GM12878 (cell line): ENCODE measurements at regions of chr5 and their contacts with region 1.

Region 1: DNA sequence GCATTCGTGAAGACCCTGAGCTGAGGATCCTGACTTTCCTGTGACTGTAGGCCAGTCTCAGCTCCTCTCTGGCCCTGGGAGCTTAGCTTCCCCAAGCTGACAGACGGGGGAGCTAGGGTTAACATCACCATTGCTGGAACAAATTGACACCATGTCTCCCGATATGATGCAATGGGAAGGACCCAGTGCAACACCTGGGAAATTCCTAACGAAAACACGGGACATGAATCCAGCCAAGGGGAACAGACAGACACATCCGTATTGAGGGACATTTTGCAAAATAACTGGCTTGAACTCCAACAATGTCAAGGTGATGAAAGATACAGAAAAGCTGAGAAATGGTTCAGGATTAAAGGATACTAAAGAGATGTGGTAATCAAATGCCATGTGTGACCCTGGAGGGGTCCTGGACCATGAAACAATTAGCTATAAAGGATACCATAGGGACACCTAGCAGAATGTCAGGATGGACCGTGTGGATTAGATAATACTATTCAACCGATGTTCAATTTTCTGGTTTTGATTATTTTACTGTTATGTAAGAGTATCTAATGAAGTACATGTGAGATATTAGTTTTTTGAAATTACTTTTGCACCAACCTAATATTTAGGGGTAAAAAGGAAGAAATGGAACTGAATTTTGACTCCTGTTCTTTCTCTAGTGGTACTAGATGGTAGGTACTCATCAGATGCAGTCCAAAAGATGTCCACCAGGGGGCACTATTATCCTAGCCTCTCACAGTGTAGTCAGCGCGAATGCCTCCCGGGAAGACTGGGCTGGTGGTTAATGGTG is 52.7 kb downstream of the NDST1 start:
- DNase-seq: peak; percentile 42
- ATAC-seq: peak; percentile 91
- H3K4me3 ChIP-seq: no peak overlapping the region
- H3K27ac ChIP-seq: no peak overlapping the region
- H3K4me1 ChIP-seq: peaks cover 14% of the 10 kb centered on the region
- H3K27me3 ChIP-seq: no peaks in the 10 kb centered on the region
- CTCF ChIP-seq: peak; percentile 75 to 89 (median 86)
- EP300 ChIP-seq: no peak
- POLR2A ChIP-seq: no peak
- RAD21 ChIP-seq: peak; percentile 96

Region 2: DNA sequence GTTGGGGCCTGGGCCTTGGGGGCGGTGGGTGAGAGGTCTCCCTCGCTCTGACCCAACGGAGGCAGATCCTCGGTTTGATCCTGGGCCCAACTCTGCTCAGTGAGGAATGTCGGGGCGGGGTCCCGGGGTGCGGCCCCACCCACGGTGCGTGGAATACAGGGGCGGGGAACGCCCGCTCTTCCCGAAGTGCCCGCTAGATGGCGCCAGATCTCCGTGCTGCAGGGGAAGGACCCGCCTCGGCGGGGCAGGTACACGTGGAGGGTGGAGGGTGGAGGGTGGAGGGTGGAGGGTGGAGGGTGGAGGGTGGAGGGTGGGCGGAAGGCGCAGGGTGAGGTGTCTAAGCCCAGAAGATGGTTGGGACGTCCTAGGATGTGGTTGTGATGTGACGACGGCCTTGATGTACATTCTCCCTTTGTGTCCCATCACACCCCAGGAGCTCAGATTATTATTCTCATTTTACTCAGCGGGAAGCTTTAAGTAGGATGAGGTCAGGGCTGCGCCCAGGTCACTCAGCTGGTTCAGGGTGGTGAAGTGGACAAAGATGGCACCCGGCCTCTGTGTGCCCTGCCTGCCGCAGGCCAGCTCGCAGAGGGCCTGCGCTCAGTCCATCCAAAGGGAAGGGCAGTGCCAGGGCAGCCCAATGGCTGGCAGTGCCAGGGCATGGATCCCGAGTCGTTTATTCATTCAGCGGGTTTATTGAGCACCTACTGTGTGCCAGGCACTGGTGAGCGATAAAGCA is 101.6 kb before region 1 on chr5:
- CTCF ChIA-PET with region 1: interaction called, 97 read pairs
- POLR2A ChIA-PET with region 1: no interaction called
- RAD21 ChIA-PET with region 1: interaction called, 59 read pairs
- SMC1A ChIA-PET with region 1: interaction called, 58 read pairs
- in situ Hi-C with region 1: no loop called
- intact Hi-C with region 1: loop called (anchors 5 kb)
- DNase-seq: no peak
- ATAC-seq: peak; percentile 91
- H3K4me3 ChIP-seq: peak overlapping the region; percentile 39; the same call in 1 of the 2 replicates
- H3K27ac ChIP-seq: no peak overlapping the region
- H3K4me1 ChIP-seq: peaks cover 35% of the 10 kb centered on the region
- H3K27me3 ChIP-seq: no peaks in the 10 kb centered on the region
- CTCF ChIP-seq: peak; percentile 62 to 93 (median 84)
- EP300 ChIP-seq: no peak
- POLR2A ChIP-seq: no peak
- RAD21 ChIP-seq: peak; percentile 92

Region 3: GRCh38 chr5:150609843-150610584 is 49.4 kb after region 1 on chr5:
- CTCF ChIA-PET with region 1: no interaction called
- POLR2A ChIA-PET with region 1: no interaction called
- RAD21 ChIA-PET with region 1: no interaction called
- SMC1A ChIA-PET with region 1: no interaction called
- in situ Hi-C with region 1: no loop called
- intact Hi-C with region 1: no loop called
- DNase-seq: no peak
- ATAC-seq: peak; percentile 42
- H3K4me3 ChIP-seq: no peak overlapping the region
- H3K27ac ChIP-seq: no peak overlapping the region
- H3K4me1 ChIP-seq: no peaks in the 10 kb centered on the region
- H3K27me3 ChIP-seq: no peaks in the 10 kb centered on the region; a peak in 1 of 4 replicates
- CTCF ChIP-seq: no peak
- EP300 ChIP-seq: no peak
- POLR2A ChIP-seq: no peak
- RAD21 ChIP-seq: no peak

Region 4: GRCh38 chr5:150624334-150625163 is 64.0 kb after region 1 on chr5:
- CTCF ChIA-PET with region 1: interaction called, 5 read pairs
- POLR2A ChIA-PET with region 1: no interaction called
- RAD21 ChIA-PET with region 1: interaction called, 5 read pairs
- SMC1A ChIA-PET with region 1: interaction called, 16 read pairs
- in situ Hi-C with region 1: no loop called
- intact Hi-C with region 1: loop called (anchors 1 kb)
- DNase-seq: no peak
- ATAC-seq: peak; percentile 43
- H3K4me3 ChIP-seq: peak overlapping the region; percentile 91
- H3K27ac ChIP-seq: peak overlapping the region; percentile 66
- H3K4me1 ChIP-seq: peaks cover 40% of the 10 kb centered on the region
- H3K27me3 ChIP-seq: no peaks in the 10 kb centered on the region
- CTCF ChIP-seq: peak in 1 of 3 experiments; percentile 19; a peak in 1 of 6 replicates
- EP300 ChIP-seq: no peak
- POLR2A ChIP-seq: no peak
- RAD21 ChIP-seq: no peak

Region 5: DNA sequence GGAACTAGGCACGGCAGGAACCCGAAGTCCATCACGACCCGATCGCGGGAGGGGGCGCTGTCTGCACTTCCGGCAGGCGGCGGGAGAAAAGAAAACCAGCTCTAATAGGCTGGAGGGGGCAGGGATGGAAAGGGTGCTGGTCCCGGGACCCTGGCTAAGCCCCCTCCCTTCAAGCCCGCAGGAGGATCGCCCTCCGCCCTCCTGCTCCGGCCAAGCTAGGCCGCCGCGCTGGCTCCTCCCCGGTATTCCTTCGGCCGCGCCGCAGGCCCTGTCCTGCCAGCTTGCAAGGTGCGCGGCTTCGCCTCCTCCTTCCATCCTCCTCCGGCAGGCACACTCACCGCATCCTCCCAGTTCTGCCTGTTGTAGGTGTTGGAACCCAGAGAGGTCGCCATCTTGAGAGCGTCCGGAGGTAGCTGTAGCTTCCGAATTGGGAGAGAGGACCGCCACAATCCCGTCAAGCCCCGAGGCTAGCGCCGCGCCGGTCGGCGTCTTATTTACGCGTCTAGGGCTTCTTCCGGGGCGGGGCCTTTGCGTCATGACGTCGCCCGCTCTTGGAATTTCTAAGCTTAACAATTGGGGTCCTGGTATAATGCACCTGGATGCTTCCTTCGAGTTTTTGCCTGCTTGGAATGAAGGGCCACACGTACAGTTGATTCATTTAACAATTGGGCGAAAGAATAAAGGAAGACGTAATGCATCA is 140.1 kb after region 1 on chr5 and contains the start of gene RBM22:
- CTCF ChIA-PET with region 1: interaction called, 42 read pairs
- POLR2A ChIA-PET with region 1: interaction called, 4 read pairs
- RAD21 ChIA-PET with region 1: interaction called, 26 read pairs
- SMC1A ChIA-PET with region 1: interaction called, 27 read pairs
- in situ Hi-C with region 1: no loop called
- intact Hi-C with region 1: loop called (anchors 2 kb)
- DNase-seq: peak; percentile 57
- ATAC-seq: peak; percentile 98
- H3K4me3 ChIP-seq: peak within 1 kb of the TSS; percentile 91
- H3K27ac ChIP-seq: peak within 1 kb of the TSS; percentile 87
- H3K4me1 ChIP-seq: no peaks in the 10 kb centered on the region
- H3K27me3 ChIP-seq: no peaks in the 10 kb centered on the region
- CTCF ChIP-seq: peak; percentile 57 to 70 (median 60)
- EP300 ChIP-seq: peak in 1 of 2 experiments; percentile 22; a peak in 1 of 4 replicates
- POLR2A ChIP-seq: peak; percentile 93
- RAD21 ChIP-seq: peak; percentile 29; the same call in 1 of the 2 replicates
- polyA plus RNA-seq, gene RBM22: 26.3 to 40.3 TPM

Region 6: DNA sequence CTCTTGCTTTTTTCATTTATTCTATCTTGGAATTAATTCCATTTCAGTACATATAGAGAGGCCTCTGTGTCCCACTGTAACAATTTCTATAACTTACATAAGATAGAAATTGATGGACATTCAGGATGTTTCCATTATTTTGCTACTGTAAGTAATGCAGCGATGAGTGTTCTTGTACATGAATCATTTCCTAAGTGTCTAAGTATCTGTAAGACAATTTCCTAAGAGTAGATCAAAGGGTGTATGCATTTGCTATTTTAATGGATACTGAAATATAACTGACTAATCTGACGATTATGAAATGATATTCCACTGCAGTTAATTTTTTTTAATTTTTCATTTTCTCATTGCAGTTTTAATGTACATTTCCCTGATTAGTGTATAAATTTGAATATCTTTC is 163.2 kb after region 1 on chr5:
- CTCF ChIA-PET with region 1: interaction called, 12 read pairs
- POLR2A ChIA-PET with region 1: no interaction called
- RAD21 ChIA-PET with region 1: interaction called, 3 read pairs
- SMC1A ChIA-PET with region 1: interaction called, 4 read pairs
- in situ Hi-C with region 1: no loop called
- intact Hi-C with region 1: no loop called
- DNase-seq: no peak
- ATAC-seq: no peak
- H3K4me3 ChIP-seq: no peak overlapping the region
- H3K27ac ChIP-seq: no peak overlapping the region
- H3K4me1 ChIP-seq: no peaks in the 10 kb centered on the region
- H3K27me3 ChIP-seq: no peaks in the 10 kb centered on the region
- CTCF ChIP-seq: no peak
- EP300 ChIP-seq: no peak
- POLR2A ChIP-seq: no peak
- RAD21 ChIP-seq: no peak

Region 7: GRCh38 chr5:150778517-150779396 is 218.2 kb after region 1 on chr5 and contains the start of gene SMIM3:
- CTCF ChIA-PET with region 1: interaction called, 7 read pairs
- POLR2A ChIA-PET with region 1: no interaction called
- RAD21 ChIA-PET with region 1: interaction called, 3 read pairs
- SMC1A ChIA-PET with region 1: interaction called, 6 read pairs
- in situ Hi-C with region 1: no loop called
- intact Hi-C with region 1: loop called (anchors 2 kb)
- DNase-seq: no peak
- ATAC-seq: peak; percentile 70
- H3K4me3 ChIP-seq: peak within 1 kb of the TSS; percentile 77
- H3K27ac ChIP-seq: peak within 1 kb of the TSS; percentile 78
- H3K4me1 ChIP-seq: peaks cover 30% of the 10 kb centered on the region
- H3K27me3 ChIP-seq: no peaks in the 10 kb centered on the region
- CTCF ChIP-seq: peak; percentile 45 to 75 (median 68)
- EP300 ChIP-seq: no peak
- POLR2A ChIP-seq: peak; percentile 58; the same call in 1 of the 2 replicates
- RAD21 ChIP-seq: peak; percentile 65
- polyA plus RNA-seq, gene SMIM3: 1.4 to 5.2 TPM

Region 8: DNA sequence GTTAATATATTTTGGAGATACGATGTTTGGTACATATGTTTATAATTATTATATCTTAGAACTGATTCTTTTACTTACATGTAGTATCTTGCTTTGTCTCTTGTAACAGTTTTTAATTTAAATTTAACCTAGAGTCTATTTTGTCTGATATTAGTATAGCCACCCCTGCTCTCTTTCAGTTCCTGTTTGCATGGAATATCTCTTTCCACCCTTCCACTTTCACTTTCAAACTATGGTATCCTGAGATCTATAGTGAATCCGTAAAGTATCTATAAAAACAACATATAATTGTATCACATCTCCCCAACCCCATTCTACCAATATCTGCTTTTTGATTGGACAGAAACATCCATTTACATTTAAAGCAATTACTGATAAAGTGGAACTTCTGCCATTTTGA is 293.0 kb after region 1 on chr5:
- CTCF ChIA-PET with region 1: interaction called, 90 read pairs
- POLR2A ChIA-PET with region 1: no interaction called
- RAD21 ChIA-PET with region 1: interaction called, 43 read pairs
- SMC1A ChIA-PET with region 1: interaction called, 40 read pairs
- in situ Hi-C with region 1: loop called (anchors 5 kb)
- intact Hi-C with region 1: no loop called
- DNase-seq: no peak
- ATAC-seq: peak; percentile 80
- H3K4me3 ChIP-seq: no peak overlapping the region
- H3K27ac ChIP-seq: no peak overlapping the region
- H3K4me1 ChIP-seq: no peaks in the 10 kb centered on the region; the same call in 1 of the 2 replicates
- H3K27me3 ChIP-seq: no peaks in the 10 kb centered on the region
- CTCF ChIP-seq: no peak
- EP300 ChIP-seq: no peak
- POLR2A ChIP-seq: no peak
- RAD21 ChIP-seq: no peak